Activated T-helper 2 cell treated with anti-CD3 and anti-CD28 coated beads, Interferon-gamma antibody, Interleukin-2, Interleukin-4, amounts not matched to agents 10 μg/mL and 5 μg/mL and 100 μg/mL, durations not matched to agents 14 hours and 24 hours and 36 hours (primary cell): ENCODE measurements at regions of chr21 and their contacts with region 1.

Region 1: GRCh38 chr21:38766987-38767722 is 38.6 kb upstream of the ETS2 start:
- DNase-seq: peak; percentile 75
- H3K4me3 Mint-ChIP-seq: peak overlapping the region; percentile 66
- H3K27ac Mint-ChIP-seq: peak overlapping the region; percentile 92
- H3K4me1 Mint-ChIP-seq: peaks cover 43% of the 10 kb centered on the region
- H3K27me3 Mint-ChIP-seq: peaks cover 2% of the 10 kb centered on the region

Region 2: DNA sequence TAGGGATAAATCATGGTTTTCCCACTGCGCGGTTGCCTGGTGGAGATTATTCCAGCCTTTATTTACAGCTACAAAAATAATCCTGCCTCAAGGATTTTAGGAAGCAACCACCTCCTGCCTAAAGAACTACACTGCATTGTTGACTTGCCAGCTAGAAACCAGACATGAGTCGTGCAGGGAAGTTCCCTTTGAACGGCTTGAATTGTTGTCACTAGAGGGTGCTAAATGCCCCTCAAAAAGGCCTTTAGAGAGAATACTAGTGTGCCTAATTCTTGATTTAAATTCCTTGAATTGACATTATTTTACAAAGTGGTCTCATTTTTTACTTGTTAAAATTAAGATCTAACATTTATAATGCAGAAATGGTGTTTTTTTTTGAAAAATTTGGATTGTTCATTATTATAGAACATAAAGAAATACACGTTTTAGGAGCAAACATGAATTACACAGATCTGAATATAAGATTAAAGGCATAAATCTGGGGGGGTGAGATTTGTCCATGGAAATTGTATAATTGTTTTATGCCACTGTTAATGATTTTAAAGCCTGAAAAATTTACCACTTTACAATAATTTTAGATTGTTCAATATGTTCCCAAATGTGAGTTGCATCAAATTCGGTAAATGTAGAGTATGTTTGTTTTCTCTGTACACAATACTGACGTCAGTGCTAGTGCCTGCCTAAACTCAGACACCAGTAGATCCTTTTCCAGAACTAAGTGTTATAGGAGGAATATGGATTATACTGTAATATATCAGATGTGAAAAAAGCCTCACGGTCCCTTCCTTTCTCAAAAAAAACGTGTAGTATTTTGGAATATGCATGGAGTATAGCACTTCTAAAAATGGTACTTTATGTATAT is 261.3 kb before region 1 on chr21:
- intact Hi-C with region 1: loop called (anchors 1 kb)
- DNase-seq: peak; percentile 21
- H3K4me3 Mint-ChIP-seq: no peak overlapping the region
- H3K27ac Mint-ChIP-seq: no peak overlapping the region
- H3K4me1 Mint-ChIP-seq: peaks cover 22% of the 10 kb centered on the region
- H3K27me3 Mint-ChIP-seq: peaks cover 31% of the 10 kb centered on the region

Region 3: GRCh38 chr21:38805328-38806152 is 38.4 kb after region 1 on chr21 and contains the start of gene ETS2:
- intact Hi-C with region 1: loop called (anchors 1 kb)
- DNase-seq: peak; percentile 73
- H3K4me3 Mint-ChIP-seq: peak within 1 kb of the TSS; percentile 94
- H3K27ac Mint-ChIP-seq: peak within 1 kb of the TSS; percentile 93
- H3K4me1 Mint-ChIP-seq: peaks cover 49% of the 10 kb centered on the region
- H3K27me3 Mint-ChIP-seq: no peaks in the 10 kb centered on the region
- total RNA-seq, gene ETS2: 62.8 and 63.9 TPM in 2 replicates

Region 4: GRCh38 chr21:38913120-38913892 is 146.2 kb after region 1 on chr21:
- intact Hi-C with region 1: loop called (anchors 1 kb)
- DNase-seq: no peak
- H3K4me3 Mint-ChIP-seq: no peak overlapping the region
- H3K27ac Mint-ChIP-seq: no peak overlapping the region
- H3K4me1 Mint-ChIP-seq: peaks cover 23% of the 10 kb centered on the region
- H3K27me3 Mint-ChIP-seq: peaks cover 1% of the 10 kb centered on the region

Region 5: GRCh38 chr21:38930853-38931252 is 163.7 kb after region 1 on chr21:
- intact Hi-C with region 1: no loop called
- DNase-seq: no peak
- H3K4me3 Mint-ChIP-seq: no peak overlapping the region
- H3K27ac Mint-ChIP-seq: no peak overlapping the region
- H3K4me1 Mint-ChIP-seq: peaks cover 28% of the 10 kb centered on the region
- H3K27me3 Mint-ChIP-seq: no peaks in the 10 kb centered on the region

Region 6: DNA sequence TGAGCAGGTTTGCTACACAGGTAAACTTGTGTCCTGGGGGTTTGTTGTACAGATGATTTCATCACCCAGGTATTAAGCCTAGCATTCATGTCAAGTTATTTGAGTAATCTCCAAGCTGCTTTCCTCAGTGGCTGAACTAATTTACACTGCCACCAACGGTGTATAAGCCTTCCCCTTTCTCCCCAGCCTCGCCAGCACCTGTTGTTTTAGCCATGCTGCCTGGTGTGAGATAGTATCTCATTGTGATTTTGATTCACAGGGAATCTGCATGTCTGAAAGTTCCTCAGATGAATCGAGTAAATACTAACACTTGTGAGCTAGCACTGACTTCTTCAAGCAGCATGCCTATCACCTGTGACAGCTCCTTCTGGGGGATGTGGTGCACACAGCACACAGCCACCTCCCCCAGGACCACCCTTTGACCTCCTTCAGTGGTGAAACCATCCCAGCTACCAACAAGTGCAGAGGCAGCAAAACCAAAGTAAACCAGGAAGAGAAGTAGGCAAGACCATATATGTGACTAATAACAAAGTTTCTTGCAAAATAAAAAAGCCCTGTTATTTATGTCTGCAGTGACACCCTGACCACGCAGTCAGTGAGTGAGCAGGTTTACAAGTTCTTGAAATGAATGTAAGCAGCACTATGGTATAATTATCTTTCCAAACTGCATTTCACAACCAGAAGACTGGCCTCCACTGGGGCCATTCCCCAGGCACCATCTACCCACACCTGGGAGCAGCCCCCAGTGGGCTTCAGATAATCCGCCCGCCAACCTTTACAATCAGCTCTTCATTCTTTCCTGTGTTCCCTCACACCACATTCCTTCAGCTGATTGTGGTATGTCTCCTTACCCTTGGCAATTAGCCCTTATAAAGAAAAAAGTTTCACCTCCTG is 212.3 kb after region 1 on chr21:
- intact Hi-C with region 1: loop called (anchors 1 kb)
- DNase-seq: no peak
- H3K4me3 Mint-ChIP-seq: no peak overlapping the region
- H3K27ac Mint-ChIP-seq: peak overlapping the region; percentile 82
- H3K4me1 Mint-ChIP-seq: peaks cover 63% of the 10 kb centered on the region
- H3K27me3 Mint-ChIP-seq: no peaks in the 10 kb centered on the region